Endothelial cell of umbilical vein (primary cell): ENCODE measurements at regions of chr19 and their contacts with region 1.

Region 1: GRCh38 chr19:9621156-9622037 is at the start of gene ZNF561:
- DNase-seq: peak; percentile 90
- H3K4me3 ChIP-seq: peak within 1 kb of the TSS; percentile 27 to 76 (median 57)
- H3K27ac ChIP-seq: peak within 1 kb of the TSS; percentile 93
- H3K4me1 ChIP-seq: peaks cover 10% of the 10 kb centered on the region
- H3K27me3 ChIP-seq: no peaks in the 10 kb centered on the region
- CTCF ChIP-seq: no peak
- POLR2A ChIP-seq: peak; percentile 83
- total RNA-seq, gene ZNF561: 39.4 and 44.9 TPM in 2 replicates

Region 2: GRCh38 chr19:9205501-9206113 is 415.8 kb before region 1 on chr19:
- CTCF ChIA-PET with region 1: interaction called, 5 read pairs
- POLR2A ChIA-PET with region 1: no interaction called
- dilution Hi-C with region 1: no loop called
- intact Hi-C with region 1: loop called (anchors 1 kb)
- DNase-seq: peak; percentile 58
- H3K4me3 ChIP-seq: no peak overlapping the region
- H3K27ac ChIP-seq: no peak overlapping the region
- H3K4me1 ChIP-seq: no peaks in the 10 kb centered on the region
- H3K27me3 ChIP-seq: no peaks in the 10 kb centered on the region
- CTCF ChIP-seq: peak; percentile 74 to 87
- POLR2A ChIP-seq: no peak

Region 3: DNA sequence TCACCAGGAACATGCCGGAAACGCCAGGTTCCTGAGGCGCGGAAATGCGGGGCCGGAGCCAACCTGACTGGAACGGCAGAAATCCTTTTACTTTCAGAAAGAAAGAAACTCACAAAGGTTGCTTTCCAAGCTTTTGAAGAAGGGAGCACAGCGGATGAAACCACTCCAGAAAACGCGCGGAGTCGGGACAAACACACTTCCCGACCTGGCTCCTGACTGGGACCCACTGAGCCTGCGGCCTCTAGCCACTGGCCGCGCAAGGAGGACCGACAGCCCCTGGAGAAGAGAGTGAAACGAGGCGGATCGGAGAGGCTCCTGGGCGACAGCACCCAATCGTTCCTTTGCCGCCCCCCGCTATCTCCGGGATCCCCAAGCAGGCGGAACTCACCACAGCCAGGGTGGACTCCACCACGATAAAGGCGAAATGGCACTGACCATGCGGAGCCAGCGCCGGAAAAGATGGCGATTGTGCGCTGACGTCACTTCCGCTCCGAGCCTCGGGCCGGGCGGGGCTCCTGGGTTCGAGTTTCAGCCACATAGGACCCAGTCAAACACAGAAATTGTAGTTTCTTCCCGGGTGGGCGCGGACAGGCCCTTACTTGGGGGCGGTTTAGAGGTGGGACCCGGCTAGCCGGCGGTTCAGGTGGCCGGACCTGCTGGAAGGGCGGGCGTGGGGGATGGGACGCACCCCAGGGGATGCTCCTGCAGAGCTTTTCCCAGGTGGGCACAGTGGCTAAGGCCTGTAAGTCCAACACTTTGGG is 37.1 kb before region 1 on chr19 and contains the start of gene ZNF121:
- CTCF ChIA-PET with region 1: interaction called, 3 read pairs
- POLR2A ChIA-PET with region 1: no interaction called
- dilution Hi-C with region 1: no loop called
- intact Hi-C with region 1: loop called (anchors 5 kb)
- DNase-seq: peak; percentile 82
- H3K4me3 ChIP-seq: peak within 1 kb of the TSS; percentile 72 to 97 (median 90)
- H3K27ac ChIP-seq: peak within 1 kb of the TSS; percentile 82
- H3K4me1 ChIP-seq: no peaks in the 10 kb centered on the region
- H3K27me3 ChIP-seq: no peaks in the 10 kb centered on the region
- CTCF ChIP-seq: no peak
- POLR2A ChIP-seq: peak; percentile 94
- total RNA-seq, gene ZNF121: 21.4 and 25.1 TPM in 2 replicates

Region 4: DNA sequence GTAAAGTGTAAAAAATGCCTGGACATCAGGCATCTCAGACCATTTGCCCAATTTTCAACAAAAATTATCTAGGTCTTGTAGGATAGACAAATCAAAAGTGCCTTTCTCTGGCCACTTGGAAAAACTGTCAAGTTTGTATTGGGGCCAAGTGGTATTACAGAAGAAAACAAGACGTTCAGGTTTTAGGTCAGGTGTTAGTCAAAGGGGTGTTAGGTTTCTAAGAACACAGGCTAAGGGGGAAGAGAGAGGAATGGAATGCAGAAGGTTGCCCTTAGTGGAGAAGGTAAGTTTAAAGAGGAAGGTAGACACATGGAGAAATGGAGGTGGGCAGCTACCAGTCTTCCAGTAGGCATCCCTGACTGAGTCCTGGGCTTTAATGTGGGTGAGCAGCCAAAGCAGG is 19.6 kb after region 1 on chr19:
- CTCF ChIA-PET with region 1: no interaction called
- POLR2A ChIA-PET with region 1: no interaction called
- dilution Hi-C with region 1: no loop called
- intact Hi-C with region 1: no loop called
- DNase-seq: no peak
- H3K4me3 ChIP-seq: no peak overlapping the region
- H3K27ac ChIP-seq: no peak overlapping the region
- H3K4me1 ChIP-seq: no peaks in the 10 kb centered on the region
- H3K27me3 ChIP-seq: no peaks in the 10 kb centered on the region
- CTCF ChIP-seq: no peak
- POLR2A ChIP-seq: no peak

Region 5: GRCh38 chr19:9768175-9769112 is 147.0 kb after region 1 on chr19 and contains the start of gene ZNF846:
- CTCF ChIA-PET with region 1: interaction called, 13 read pairs
- POLR2A ChIA-PET with region 1: no interaction called
- dilution Hi-C with region 1: no loop called
- intact Hi-C with region 1: loop called (anchors 1 kb)
- DNase-seq: peak; percentile 93
- H3K4me3 ChIP-seq: peak within 1 kb of the TSS; percentile 42 to 85 (median 83)
- H3K27ac ChIP-seq: peak within 1 kb of the TSS; percentile 85
- H3K4me1 ChIP-seq: peaks cover 7% of the 10 kb centered on the region
- H3K27me3 ChIP-seq: no peaks in the 10 kb centered on the region
- CTCF ChIP-seq: no peak
- POLR2A ChIP-seq: peak; percentile 72
- total RNA-seq, gene ZNF846: 6.9 and 8.3 TPM in 2 replicates